ENCODE measurements at regions of chr3 and their contacts with region 1.

Region 1: GRCh38 chr3:139267300-139268246 is 76.2 kb upstream of the MRPS22 start:
- DNase-seq: no peak
- ATAC-seq: no peak

Region 2: DNA sequence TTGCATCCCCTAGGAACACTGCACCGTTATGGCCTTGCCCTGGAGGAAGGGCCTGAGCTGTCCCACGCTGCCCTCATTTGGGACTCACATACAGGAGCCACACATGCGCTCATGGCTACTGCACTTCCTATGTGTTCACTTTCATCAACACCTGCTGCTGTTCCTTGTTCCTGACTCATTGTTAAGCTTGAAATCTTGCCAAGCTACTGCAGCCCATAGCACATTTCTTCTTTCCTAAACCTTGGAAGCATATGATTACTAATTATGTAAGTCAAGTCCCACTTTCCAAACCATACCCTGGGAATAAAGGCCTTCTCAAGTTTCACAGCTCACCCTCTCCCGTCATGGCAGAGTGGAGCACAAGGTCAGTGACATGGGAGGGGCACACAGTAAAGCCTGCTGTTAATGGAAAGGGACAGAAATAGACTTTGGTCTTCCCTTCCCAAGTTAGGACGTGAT is 975.3 kb after region 1 on chr3:
- intact Hi-C with region 1: loop called (anchors 5 kb)
- DNase-seq: no peak
- ATAC-seq: no peak

Region 3: GRCh38 chr3:140467104-140467577 is 1199.6 kb after region 1 on chr3:
- intact Hi-C with region 1: no loop called
- DNase-seq: no peak
- ATAC-seq: no peak

Measured in sciatic nerve (tissue), 2 donors.